Activated B cell treated with CpG ODN at 0.5 μM for 24 hours (primary cell): ENCODE measurements at regions of chr19 and their contacts with region 1.

Region 1: GRCh38 chr19:13150187-13150930 is at the starts of genes IER2 and STX10:
- DNase-seq: peak; percentile 88
- ATAC-seq: peak; percentile 45
- H3K4me3 Mint-ChIP-seq: peak within 1 kb of the TSS; percentile 99
- H3K27ac Mint-ChIP-seq: peak within 1 kb of the TSS; percentile 99
- H3K4me1 Mint-ChIP-seq: peaks cover 40% of the 10 kb centered on the region
- H3K27me3 Mint-ChIP-seq: no peaks in the 10 kb centered on the region
- CTCF ChIP-seq: no peak
- total RNA-seq, gene IER2: 116 and 119 TPM in 2 replicates
- total RNA-seq, gene STX10: 41.7 and 43.6 TPM in 2 replicates

Region 2: DNA sequence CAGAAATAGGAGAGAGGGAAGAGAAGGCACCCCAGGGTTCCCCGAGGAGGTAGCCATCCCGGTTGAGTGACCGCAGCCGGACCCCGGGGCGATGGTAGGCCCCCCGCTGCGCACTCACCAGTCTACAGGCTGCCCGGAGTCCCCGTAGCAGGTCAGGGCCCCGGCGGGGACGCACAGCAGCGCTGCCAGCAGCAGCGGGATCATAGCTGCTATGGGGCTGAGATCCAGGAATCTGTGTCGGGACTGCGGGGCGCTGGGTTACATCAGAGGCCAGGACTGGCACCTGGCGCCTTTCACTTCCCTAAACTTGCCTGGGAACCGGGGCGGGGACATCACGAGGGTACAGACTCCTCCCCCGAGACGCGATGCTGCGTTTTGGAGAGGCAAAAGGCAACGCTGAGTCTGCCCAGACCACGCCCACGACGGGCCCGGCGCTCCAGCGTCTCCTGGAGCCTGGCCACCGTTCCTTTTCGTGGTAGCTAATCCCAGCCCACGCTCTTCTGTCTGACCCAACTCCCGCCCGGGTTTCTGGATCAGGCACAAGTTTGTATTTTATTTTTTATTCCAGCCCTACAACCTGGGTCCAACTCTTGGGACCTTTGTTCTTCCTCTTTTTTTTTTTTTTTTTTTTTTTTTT is 269.1 kb before region 1 on chr19 and contains the start of gene DNASE2:
- CTCF ChIA-PET with region 1: no interaction called
- POLR2A ChIA-PET with region 1: interaction called, 11 read pairs
- intact Hi-C with region 1: no loop called
- DNase-seq: peak; percentile 85
- ATAC-seq: peak; percentile 84
- H3K4me3 Mint-ChIP-seq: peak within 1 kb of the TSS; percentile 92
- H3K27ac Mint-ChIP-seq: peak within 1 kb of the TSS; percentile 94
- H3K4me1 Mint-ChIP-seq: peaks cover 34% of the 10 kb centered on the region
- H3K27me3 Mint-ChIP-seq: no peaks in the 10 kb centered on the region
- CTCF ChIP-seq: no peak
- total RNA-seq, gene DNASE2: 26.5 and 27.2 TPM in 2 replicates

Region 3: DNA sequence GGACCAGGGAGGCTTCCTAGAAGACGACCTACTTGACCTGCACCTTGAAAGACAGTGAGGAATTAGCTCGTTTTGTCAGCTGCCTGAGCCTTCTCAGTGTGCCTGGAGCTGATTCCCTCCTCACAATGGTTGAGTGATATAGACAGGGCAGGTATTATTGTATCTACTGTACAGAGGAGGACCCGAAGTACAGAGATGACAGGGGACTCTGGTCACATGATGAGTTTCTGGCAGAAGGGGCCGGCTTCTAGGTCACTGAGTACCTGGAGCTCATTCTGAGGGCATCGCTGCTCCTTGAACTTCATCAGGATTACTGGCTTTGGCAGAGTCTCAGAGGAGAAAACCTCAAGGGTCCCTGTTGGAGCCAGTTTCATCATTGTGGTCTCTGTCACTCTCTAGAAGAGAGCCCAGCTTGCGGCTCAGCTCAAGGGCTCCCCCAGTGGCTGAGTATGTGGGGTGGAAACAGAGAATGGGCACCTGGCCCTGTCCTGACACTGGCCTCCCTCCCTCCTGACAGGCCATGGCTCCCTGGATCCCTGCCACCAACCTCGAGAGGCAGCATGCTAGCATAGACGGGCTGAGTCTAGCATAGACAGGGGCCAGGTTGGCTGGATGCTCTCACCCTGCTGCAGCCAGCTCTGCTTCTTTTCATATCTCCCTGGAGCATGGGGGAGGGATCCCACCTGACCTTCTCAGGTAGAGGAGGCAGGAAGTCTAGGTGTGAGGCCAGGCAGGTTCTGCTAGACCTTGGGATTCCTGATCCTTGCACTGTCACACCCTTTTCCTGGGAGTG is 116.3 kb before region 1 on chr19:
- CTCF ChIA-PET with region 1: no interaction called
- POLR2A ChIA-PET with region 1: no interaction called
- intact Hi-C with region 1: no loop called
- DNase-seq: no peak
- ATAC-seq: peak; percentile 88
- H3K4me3 Mint-ChIP-seq: no peak overlapping the region
- H3K27ac Mint-ChIP-seq: no peak overlapping the region
- H3K4me1 Mint-ChIP-seq: no peaks in the 10 kb centered on the region
- H3K27me3 Mint-ChIP-seq: peaks cover 14% of the 10 kb centered on the region
- CTCF ChIP-seq: no peak

Region 4: GRCh38 chr19:13099073-13099999 is 51.0 kb before region 1 on chr19:
- CTCF ChIA-PET with region 1: interaction called, 6 read pairs
- POLR2A ChIA-PET with region 1: interaction called, 101 read pairs
- intact Hi-C with region 1: loop called (anchors 1 kb)
- DNase-seq: peak; percentile 70
- ATAC-seq: peak; percentile 2
- H3K4me3 Mint-ChIP-seq: peak overlapping the region; percentile 88
- H3K27ac Mint-ChIP-seq: peak overlapping the region; percentile 93
- H3K4me1 Mint-ChIP-seq: peaks cover 76% of the 10 kb centered on the region
- H3K27me3 Mint-ChIP-seq: no peaks in the 10 kb centered on the region
- CTCF ChIP-seq: no peak

Region 5: DNA sequence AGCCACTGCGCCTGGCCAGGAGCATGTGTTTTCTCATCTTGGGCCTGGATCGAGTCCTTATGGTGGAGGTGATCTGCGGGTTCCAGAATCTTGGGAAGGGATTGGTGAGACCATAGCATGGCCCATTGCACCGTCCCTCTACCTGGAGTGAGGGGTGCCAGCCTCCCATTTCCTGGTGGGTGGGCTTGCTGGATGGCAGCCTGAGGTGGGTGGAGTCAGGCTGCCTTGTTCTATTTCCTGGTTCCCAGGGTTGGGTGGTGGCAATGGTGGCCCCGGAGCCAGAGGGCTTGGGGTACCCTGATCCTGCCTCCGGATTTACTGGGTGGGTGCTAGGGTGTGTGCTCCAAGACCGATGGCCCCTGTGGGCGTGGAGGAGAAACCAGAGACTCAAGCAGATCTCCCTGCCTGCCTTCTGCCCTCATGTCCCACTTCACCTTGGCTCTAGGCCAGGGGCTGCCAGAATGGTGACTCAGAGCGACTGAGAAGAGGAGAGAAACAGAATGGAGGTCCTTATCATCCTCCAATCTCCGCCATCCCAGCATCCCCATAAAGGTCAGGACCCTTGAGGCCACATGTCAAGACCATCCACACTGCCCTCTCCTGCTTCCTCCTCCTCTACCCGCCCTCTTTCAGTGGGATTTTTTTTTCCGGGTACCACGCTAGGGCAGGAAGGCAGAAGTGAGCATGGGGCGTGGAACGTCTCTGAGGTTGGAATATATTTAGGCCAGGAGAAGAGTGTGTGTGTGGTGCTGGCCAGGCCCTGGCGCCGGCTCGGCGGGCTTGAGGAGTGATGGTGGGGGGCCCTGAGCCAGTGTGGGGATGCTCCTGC is 21.9 kb after region 1 on chr19:
- CTCF ChIA-PET with region 1: interaction called, 38 read pairs
- POLR2A ChIA-PET with region 1: interaction called, 413 read pairs
- intact Hi-C with region 1: loop called (anchors 2 kb)
- DNase-seq: no peak
- ATAC-seq: peak; percentile 16
- H3K4me3 Mint-ChIP-seq: peak overlapping the region; percentile 69
- H3K27ac Mint-ChIP-seq: peak overlapping the region; percentile 88
- H3K4me1 Mint-ChIP-seq: peaks cover 76% of the 10 kb centered on the region
- H3K27me3 Mint-ChIP-seq: no peaks in the 10 kb centered on the region
- CTCF ChIP-seq: no peak

Region 6: GRCh38 chr19:13262450-13262849 is 112.1 kb after region 1 on chr19:
- CTCF ChIA-PET with region 1: interaction called, 7 read pairs
- POLR2A ChIA-PET with region 1: interaction called, 32 read pairs
- intact Hi-C with region 1: loop called (anchors 1 kb)
- DNase-seq: no peak
- ATAC-seq: peak; percentile 36
- H3K4me3 Mint-ChIP-seq: no peak overlapping the region
- H3K27ac Mint-ChIP-seq: peak overlapping the region; percentile 35
- H3K4me1 Mint-ChIP-seq: peaks cover 28% of the 10 kb centered on the region
- H3K27me3 Mint-ChIP-seq: peaks cover under 1% of the 10 kb centered on the region
- CTCF ChIP-seq: no peak

Region 7: GRCh38 chr19:14081325-14082093 is 931.1 kb after region 1 on chr19:
- CTCF ChIA-PET with region 1: no interaction called
- POLR2A ChIA-PET with region 1: no interaction called
- intact Hi-C with region 1: loop called (anchors 2 kb)
- DNase-seq: peak; percentile 98
- ATAC-seq: peak; percentile 91
- H3K4me3 Mint-ChIP-seq: peak overlapping the region; percentile 94
- H3K27ac Mint-ChIP-seq: peak overlapping the region; percentile 95
- H3K4me1 Mint-ChIP-seq: peaks cover 17% of the 10 kb centered on the region
- H3K27me3 Mint-ChIP-seq: no peaks in the 10 kb centered on the region
- CTCF ChIP-seq: no peak